ENCODE measurements at regions of chr15 and their contacts with region 1.

Region 1: DNA sequence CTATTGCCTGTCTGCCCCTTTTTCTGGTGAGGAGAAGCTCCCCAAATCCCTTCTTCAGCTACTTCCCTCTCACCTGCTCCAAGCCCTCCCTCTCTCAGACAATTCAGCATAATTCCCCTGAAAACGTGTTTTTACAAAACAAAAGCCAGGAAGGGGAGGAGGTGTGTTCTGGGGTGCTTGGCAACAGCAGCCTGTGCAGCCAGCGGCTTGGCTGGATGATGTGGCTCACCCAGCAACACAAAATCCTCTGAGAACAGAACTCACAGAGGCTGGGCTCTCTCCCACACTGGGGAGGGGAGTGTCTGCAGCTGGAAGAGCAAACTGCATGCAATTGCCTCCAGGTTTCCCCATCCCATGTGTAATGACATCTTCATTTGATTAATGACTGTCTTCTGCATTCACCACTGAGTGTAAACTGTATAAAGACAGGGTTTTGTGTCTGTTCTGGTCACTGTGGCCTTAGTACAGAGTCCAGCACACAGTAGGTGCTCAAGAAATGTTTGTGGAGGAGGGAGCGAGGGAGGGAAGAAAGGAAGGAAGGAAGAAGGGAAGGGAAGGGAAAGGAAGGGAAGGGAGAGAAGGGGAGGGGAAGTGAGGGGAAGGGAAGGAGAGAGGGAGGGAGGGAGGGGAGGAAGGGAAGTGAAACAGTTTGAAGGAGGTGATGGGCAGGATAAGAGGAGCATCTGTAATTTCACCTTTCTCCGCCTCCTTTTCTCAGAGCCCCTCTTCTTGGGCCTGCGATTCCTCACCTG is 70.1 kb upstream of the GLCE start:
- DNase-seq: peak in 1 of 2 experiments; percentile 63
- H3K4me3 ChIP-seq: peak overlapping the region in 3 of 4 experiments; percentile 24 to 48 (median 35); a peak in 5 of 8 replicates
- H3K27ac ChIP-seq: peak overlapping the region; percentile 60; the same call in 1 of the 2 replicates
- H3K4me1 ChIP-seq: peaks cover 39 to 75% (median 61%) of the 10 kb centered on the region in 4 experiments
- H3K27me3 ChIP-seq: peaks cover 0 to 4% (median 2%) of the 10 kb centered on the region in 4 experiments; a peak in 1 of 7 replicates
- CTCF ChIP-seq: no peak
- EP300 ChIP-seq: peak in 1 of 2 experiments; percentile 45; a peak in 1 of 3 replicates
- POLR2A ChIP-seq: no peak
- RAD21 ChIP-seq: no peak

Region 2: DNA sequence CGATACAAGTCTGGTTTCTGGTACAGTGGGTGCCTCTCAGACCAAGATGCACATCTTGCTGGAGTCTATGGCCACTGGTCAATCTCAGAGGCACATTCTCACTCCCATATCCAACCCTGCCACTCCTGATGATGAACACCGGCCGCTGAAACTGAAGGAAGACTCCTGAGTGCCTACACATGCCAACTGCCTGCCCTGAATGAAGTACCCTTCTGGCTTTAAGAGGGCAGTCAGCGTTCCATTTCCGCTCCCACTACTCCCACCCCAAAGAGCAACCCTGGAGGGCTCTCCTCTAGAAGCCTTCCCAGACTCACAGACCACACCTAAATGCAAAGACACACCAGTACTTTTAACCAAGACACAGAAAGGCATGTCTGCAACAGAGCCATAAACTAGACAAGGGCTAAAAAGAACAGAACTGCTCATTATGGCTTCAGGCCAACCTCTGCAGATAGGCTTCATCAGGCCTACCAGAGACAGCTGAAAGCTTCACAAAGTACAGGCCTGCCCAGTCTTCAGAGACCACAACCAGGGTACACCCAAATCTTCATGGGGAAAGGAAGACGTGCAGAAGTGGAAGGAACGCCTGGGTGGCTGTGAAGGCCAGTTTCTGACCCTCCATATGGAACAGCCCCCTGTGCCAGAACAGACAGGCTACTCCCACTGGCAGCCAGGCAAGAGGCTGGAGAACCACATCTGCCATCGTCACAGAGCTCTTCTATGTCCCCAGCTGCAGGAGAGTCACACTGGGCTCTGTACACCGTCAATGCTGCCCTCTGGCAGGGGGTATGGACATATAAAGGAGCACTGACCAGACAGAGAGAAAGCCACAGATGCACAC is 283.9 kb before region 1 on chr15:
- CTCF ChIA-PET with region 1: no interaction called
- POLR2A ChIA-PET with region 1: no interaction called
- DNase-seq: peak in 1 of 2 experiments; percentile 39
- H3K4me3 ChIP-seq: no peak overlapping the region
- H3K27ac ChIP-seq: no peak overlapping the region
- H3K4me1 ChIP-seq: peaks cover 5 to 14% (median 11%) of the 10 kb centered on the region in 4 experiments; a peak in 6 of 7 replicates
- H3K27me3 ChIP-seq: no peaks in the 10 kb centered on the region
- CTCF ChIP-seq: no peak
- EP300 ChIP-seq: no peak
- POLR2A ChIP-seq: no peak
- RAD21 ChIP-seq: no peak

Region 3: DNA sequence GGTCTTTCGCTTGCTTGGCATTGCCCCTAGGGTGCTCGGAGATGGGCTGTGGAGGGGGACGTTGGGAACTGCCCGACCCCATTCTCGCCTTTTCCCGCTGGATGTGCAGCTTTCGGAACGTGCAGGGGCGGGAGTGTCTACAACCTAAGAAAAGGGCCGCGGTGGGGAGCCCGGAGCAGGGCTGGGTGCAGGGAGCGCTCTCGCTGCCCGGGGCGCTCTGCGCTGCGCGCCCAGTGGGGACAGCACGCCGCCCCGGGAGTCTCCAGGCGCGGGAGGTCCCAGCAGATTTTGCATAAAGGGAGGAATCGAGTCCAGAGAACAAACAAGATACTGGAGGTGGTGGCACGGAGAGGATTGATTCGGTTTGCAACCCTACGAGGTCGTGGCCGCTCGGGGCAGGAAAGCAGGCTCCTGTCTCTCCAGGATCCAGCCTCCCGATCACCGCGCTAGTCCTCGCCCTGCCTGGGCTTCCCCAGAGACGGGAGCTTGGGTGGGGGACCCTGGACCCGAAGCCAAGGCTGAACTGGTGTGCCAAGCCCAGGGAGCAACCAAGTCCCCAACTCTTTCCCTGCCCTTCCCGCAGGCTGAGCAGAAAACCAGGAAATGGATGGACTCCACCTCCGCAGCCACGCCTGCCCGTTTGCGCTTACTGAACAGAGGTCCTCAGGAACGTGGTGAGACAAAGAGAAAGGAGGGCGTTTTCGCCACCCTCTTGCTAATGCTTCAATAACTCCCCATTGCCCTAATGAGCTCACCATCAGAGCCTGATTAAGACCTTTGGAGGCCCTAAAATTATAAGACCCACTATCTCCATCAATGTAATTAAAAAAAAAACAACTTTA is 16.2 kb before region 1 on chr15:
- CTCF ChIA-PET with region 1: interaction called, 9 read pairs
- POLR2A ChIA-PET with region 1: interaction called, 39 read pairs
- DNase-seq: peak; percentile 54 to 81
- H3K4me3 ChIP-seq: peak overlapping the region; percentile 53 to 88 (median 72)
- H3K27ac ChIP-seq: peak overlapping the region; percentile 54; the same call in 1 of the 2 replicates
- H3K4me1 ChIP-seq: peaks cover 12 to 14% (median 13%) of the 10 kb centered on the region in 4 experiments; a peak in 6 of 7 replicates
- H3K27me3 ChIP-seq: no peaks in the 10 kb centered on the region
- CTCF ChIP-seq: no peak
- EP300 ChIP-seq: no peak
- POLR2A ChIP-seq: peak; percentile 62 to 75
- RAD21 ChIP-seq: peak in 1 of 2 experiments; percentile 12; a peak in 2 of 4 replicates

Region 4: DNA sequence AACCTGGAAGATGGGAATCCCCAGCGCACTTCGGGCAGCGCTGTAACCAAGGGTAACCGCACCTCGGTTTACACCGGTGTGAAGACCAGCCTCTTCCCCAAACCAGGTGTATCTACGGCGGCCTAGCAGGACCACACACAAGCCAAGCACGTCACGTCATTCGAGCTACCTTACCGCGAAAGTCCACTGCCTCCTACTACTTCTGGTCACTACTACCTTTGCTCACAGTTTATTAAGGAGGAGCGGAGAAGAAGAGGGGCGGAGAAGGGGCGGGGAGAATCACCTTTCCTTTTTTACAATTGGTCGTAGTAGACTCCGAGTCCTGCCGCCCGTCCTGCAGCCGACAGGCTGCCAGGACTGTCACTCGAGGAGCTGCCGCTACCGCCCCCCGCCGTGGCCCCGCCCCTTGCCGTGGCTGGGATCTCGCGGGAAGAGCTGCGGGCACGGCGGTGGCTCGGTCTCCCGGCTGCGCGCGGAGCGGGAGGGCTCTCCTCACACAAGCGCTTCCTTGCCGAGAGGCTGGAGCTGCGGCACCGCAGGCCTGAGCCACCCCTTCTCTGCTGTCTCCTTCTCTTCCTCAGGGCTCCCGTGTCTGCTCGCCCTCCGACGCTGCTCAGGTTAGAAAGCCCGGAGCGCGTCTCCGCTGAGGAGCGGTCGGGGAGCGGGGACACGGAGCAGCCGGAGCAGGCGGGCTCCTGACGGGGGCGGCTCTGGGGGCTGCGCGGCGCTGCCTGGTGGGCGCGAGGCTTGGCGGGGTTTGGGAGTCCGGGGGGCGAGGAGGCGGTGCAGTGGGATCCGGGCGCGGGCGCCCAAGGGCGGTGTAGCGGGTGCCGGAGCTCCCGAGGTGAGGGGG is 70.0 kb after region 1 on chr15 and contains the start of gene GLCE:
- CTCF ChIA-PET with region 1: interaction called, 5 read pairs
- POLR2A ChIA-PET with region 1: interaction called, 13 read pairs
- DNase-seq: peak; percentile 91 to 98
- H3K4me3 ChIP-seq: peak within 1 kb of the TSS; percentile 73 to 91 (median 88)
- H3K27ac ChIP-seq: peak within 1 kb of the TSS; percentile 70
- H3K4me1 ChIP-seq: peaks cover 0 to 9% (median 2%) of the 10 kb centered on the region in 4 experiments; a peak in 4 of 7 replicates
- H3K27me3 ChIP-seq: no peaks in the 10 kb centered on the region; a peak in 2 of 7 replicates
- CTCF ChIP-seq: no peak
- EP300 ChIP-seq: peak in 1 of 2 experiments; percentile 42; a peak in 1 of 3 replicates
- POLR2A ChIP-seq: peak; percentile 63 to 93
- RAD21 ChIP-seq: 0 out of 4 replicates have a peak, but pooled peaks of 1 of the 2 experiments have one; percentile 11
- total RNA-seq, gene GLCE: 16.2 and 17.1 TPM in 2 replicates